ENCODE measurements at regions of chr7 and their contacts with region 1.

Region 1: DNA sequence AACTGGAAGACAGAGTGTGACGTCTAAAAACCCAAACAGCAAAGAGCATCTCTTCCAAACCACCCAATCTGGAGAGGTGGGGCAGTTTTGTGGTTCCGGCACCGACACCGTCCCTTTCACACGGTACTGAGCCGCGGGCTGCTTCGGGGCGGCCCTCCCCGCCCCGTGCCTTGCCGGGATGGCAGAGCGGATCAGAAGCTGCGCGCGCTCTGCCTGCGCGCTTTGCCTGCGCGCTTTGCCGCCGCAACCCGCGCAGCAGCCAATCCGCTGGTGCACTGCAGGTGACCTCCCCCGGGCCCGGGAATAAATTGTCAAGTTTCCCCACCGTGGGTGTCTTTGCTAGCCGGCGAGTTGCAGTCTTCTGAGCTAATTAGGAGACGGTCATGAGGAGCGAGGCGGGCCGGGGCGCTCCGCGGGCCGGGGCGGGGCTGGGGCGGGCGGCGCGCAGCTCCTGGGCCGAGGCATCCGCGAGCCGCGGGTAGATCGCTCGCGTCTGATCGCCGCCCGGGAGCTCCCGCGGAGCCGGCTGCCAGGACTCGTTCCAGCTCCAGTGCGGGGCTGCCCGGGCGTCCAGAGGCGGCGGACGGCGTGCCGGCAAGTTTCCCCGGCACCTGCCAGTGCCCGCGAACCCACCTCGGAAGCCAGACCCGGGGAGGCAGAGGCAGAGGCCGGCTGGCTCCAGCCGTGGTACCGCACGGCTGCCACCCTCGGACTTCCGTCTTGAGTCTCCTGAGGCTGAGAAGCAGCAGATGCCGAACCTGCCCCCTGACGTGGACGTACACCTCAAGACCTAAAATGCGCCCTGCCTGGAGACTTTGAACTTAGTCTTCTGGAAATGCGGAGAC is 536.0 kb upstream of the GALNT17 start:
- DNase-seq: peak; percentile 42
- H3K4me3 ChIP-seq: peak overlapping the region; percentile 52 to 62 (median 53)
- H3K27ac ChIP-seq: peak overlapping the region; percentile 20
- H3K4me1 ChIP-seq: peaks cover 36% of the 10 kb centered on the region
- H3K27me3 ChIP-seq: no peaks in the 10 kb centered on the region
- CTCF ChIP-seq: no peak

Region 2: DNA sequence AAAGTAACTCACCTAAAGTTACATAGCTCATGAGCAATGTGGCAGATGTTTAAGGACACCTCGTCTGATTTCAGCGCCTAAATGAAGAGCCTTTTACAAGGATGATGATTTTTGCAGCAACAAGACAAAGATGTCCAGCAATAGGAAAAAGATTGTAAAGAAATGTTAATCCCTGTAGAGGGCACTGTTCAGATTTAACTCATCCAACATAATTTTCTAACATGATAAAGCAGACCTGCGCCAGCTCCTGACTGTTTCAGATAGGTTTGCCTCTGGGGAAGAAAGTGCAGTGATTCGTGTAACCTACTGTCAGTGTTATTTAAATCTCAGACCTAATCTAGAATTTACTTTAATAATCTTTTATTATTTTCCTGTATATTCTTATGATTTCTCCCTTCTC is 402.5 kb before region 1 on chr7:
- CTCF ChIA-PET with region 1: no interaction called
- dilution Hi-C with region 1: no loop called
- in situ Hi-C with region 1: no loop called
- intact Hi-C with region 1: loop called (anchors 10 kb)
- DNase-seq: peak; percentile 14
- H3K4me3 ChIP-seq: no peak overlapping the region
- H3K27ac ChIP-seq: no peak overlapping the region
- H3K4me1 ChIP-seq: no peaks in the 10 kb centered on the region
- H3K27me3 ChIP-seq: no peaks in the 10 kb centered on the region
- CTCF ChIP-seq: peak; percentile 29 to 51

Region 3: DNA sequence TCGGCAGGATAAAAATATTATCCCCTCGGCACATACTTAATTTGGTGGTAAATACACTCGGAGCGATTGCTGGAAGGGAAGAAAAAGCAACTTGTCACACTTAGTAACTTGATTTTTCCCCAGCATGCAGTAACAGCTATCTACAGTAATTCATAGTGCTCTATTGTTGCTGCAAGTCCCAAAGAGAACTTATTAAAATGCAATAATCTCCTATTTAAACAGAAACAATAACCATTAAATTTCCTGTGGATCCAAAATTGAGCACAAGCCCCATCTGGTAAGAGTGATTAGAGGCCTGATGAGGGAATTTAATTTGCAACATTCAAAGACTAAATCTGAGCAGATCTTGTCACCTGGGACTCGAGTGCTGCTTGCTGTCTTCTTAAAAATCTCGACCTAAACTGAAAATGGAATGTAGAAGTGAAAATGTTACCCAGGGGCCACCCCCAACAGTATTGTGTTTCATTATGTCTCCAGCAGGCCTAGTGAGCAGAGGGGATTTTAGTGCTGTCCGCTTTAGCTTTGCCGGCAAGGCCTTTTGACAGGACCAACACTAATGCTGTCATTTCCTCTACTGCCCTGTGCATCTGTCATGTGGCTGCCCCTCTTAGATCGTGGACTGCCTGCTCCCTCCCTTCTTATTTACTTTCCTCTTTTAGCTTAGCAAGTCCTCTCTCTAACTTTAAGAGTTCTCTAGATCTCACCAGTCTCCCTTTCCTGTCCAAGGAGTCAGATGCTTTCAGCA is 358.0 kb before region 1 on chr7:
- CTCF ChIA-PET with region 1: no interaction called
- dilution Hi-C with region 1: no loop called
- in situ Hi-C with region 1: no loop called
- intact Hi-C with region 1: no loop called
- DNase-seq: no peak
- H3K4me3 ChIP-seq: no peak overlapping the region
- H3K27ac ChIP-seq: no peak overlapping the region
- H3K4me1 ChIP-seq: no peaks in the 10 kb centered on the region
- H3K27me3 ChIP-seq: no peaks in the 10 kb centered on the region
- CTCF ChIP-seq: no peak

Region 4: GRCh38 chr7:70271617-70272081 is 324.3 kb before region 1 on chr7:
- CTCF ChIA-PET with region 1: no interaction called
- dilution Hi-C with region 1: no loop called
- in situ Hi-C with region 1: no loop called
- intact Hi-C with region 1: no loop called
- DNase-seq: no peak
- H3K4me3 ChIP-seq: no peak overlapping the region
- H3K27ac ChIP-seq: no peak overlapping the region
- H3K4me1 ChIP-seq: no peaks in the 10 kb centered on the region
- H3K27me3 ChIP-seq: no peaks in the 10 kb centered on the region
- CTCF ChIP-seq: no peak

Region 5: GRCh38 chr7:70325509-70326101 is 270.4 kb before region 1 on chr7:
- CTCF ChIA-PET with region 1: no interaction called
- dilution Hi-C with region 1: no loop called
- in situ Hi-C with region 1: no loop called
- intact Hi-C with region 1: loop called (anchors 5 kb)
- DNase-seq: peak; percentile 76
- H3K4me3 ChIP-seq: no peak overlapping the region
- H3K27ac ChIP-seq: peak overlapping the region; percentile 12
- H3K4me1 ChIP-seq: peaks cover 25% of the 10 kb centered on the region
- H3K27me3 ChIP-seq: no peaks in the 10 kb centered on the region
- CTCF ChIP-seq: no peak

Region 6: DNA sequence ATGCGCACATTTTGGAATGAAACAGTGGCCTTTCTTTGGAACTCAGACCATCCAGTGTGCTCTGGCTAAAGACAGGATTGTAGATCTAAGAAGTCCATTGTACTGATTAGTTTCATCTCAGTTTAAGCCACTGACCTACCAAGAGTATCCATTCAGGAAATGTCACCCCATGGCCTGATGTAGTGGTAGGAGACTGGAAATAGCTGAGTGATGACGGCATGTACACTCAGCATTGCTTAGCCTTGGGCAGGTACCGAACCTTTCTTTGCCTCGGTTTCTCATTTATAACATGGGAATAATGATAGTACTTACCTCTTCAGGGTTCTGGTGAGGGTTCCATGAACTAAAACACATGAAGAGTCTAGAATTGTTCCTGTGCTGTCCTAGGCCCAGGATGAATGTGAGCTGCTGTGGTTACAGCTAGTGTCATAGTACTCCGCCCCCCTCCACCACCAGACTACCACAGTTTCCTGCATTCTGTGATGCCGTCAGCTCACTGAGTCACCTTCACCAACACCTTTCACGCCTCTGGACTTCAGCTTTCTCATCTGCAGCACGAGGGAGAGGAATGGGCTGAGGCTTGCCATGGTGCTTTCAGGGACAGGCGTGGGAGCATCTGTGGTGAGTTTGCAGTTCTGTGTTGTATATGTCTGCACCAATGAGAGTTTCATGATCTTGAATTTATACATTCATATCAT is 52.0 kb after region 1 on chr7:
- CTCF ChIA-PET with region 1: no interaction called
- dilution Hi-C with region 1: no loop called
- in situ Hi-C with region 1: no loop called
- intact Hi-C with region 1: loop called (anchors 2 kb)
- DNase-seq: peak; percentile 95
- H3K4me3 ChIP-seq: no peak overlapping the region
- H3K27ac ChIP-seq: peak overlapping the region; percentile 37
- H3K4me1 ChIP-seq: peaks cover 20% of the 10 kb centered on the region
- H3K27me3 ChIP-seq: no peaks in the 10 kb centered on the region
- CTCF ChIP-seq: no peak

Region 7: DNA sequence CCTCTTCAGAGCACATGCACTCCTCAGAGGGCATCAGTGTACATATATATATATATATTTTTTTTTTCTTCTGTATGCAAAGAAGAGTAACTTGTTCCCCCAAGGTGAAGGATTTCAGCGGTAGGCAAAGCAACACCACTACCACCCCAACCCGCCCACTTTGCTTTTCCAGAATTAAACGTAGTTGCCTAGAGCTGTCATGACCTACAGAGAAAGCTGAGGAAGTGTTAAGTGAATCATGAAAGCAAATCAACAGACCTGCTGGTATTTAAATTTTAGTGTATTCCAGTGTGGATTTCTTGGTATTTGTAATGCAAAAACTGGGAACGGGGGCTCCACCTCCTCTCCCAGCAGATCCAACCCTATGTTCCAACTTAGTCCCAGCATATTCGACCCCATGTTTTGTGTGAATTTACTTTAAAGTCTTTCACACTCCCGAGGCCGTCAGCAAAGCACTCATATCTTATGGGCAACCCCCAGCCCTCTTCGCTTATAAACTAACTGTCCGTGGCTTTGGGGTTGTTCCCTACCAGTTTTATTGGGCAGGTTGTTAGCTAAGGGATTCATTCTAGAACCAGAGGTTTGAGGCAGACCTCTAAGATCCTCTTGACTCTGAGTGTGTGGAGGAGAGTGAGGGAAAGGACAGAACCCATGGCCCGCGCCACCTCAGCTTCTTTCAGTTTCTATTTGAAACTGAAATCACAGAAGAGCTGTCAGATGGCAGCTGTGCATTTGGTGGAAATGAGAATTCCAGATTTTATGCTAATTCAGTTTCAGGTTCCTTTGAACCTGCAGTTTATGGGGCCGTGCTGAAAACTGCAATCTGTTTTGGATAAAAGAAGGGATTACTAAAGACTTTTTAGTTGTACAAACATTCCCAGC is 85.7 kb after region 1 on chr7:
- CTCF ChIA-PET with region 1: no interaction called
- dilution Hi-C with region 1: loop called (anchors 5 kb)
- in situ Hi-C with region 1: loop called in 1 of 2 experiments (anchors 25 kb)
- intact Hi-C with region 1: no loop called
- DNase-seq: no peak
- H3K4me3 ChIP-seq: no peak overlapping the region
- H3K27ac ChIP-seq: no peak overlapping the region
- H3K4me1 ChIP-seq: no peaks in the 10 kb centered on the region
- H3K27me3 ChIP-seq: no peaks in the 10 kb centered on the region
- CTCF ChIP-seq: no peak

Measured in mammary epithelial cell (primary cell).